Left colon (tissue), 2 donors: ENCODE measurements at regions of chr9 and their contacts with region 1.

Region 1: GRCh38 chr9:107243751-107244150 is 39.3 kb upstream of the RAD23B start:
- DNase-seq: peak; percentile 23 to 74
- ATAC-seq: peak; percentile 98

Region 2: DNA sequence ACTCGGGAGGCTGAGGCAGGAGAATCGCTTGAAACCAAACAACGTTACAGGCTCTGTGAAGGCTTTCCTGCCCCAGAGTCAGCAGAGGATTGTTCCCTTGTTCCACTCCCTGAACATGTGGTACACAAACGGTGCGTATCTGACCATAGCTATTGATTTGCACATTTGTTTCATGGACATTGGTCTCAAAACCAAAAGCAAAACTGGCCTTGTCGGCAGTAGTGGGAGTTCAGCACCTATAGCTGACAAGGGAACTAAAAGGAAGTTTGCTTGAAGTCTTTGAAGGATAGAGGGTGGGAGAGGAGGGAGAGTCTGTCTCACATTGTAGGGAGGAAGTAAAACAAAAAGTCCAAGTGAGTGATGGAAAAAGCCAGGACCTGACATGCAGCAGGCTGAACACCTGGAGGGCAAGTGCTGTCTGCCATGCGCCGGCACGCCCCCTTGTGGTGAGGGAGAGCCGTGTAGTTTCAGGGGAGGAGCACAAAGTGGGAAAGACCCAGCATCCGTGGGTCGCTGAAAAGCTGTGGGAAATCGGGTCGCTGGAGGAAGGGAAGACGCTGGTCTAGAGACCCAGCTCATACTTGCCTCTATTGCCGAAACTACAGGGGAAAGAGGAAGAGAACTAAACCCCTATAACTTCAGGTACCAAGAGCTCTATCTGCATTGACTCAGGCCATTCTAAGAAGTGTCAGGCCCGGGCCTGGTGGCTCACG is 97.3 kb after region 1 on chr9:
- intact Hi-C with region 1: loop called in 1 of 2 experiments (anchors 5 kb)
- DNase-seq: peak; percentile 73 to 88
- ATAC-seq: peak; percentile 88